ENCODE measurements at regions of chr11 and their contacts with region 1.

Region 1: GRCh38 chr11:76807206-76807875 is 24.2 kb downstream of the TSKU start:
- DNase-seq: peak; percentile 80 to 96
- ATAC-seq: peak; percentile 83

Region 2: DNA sequence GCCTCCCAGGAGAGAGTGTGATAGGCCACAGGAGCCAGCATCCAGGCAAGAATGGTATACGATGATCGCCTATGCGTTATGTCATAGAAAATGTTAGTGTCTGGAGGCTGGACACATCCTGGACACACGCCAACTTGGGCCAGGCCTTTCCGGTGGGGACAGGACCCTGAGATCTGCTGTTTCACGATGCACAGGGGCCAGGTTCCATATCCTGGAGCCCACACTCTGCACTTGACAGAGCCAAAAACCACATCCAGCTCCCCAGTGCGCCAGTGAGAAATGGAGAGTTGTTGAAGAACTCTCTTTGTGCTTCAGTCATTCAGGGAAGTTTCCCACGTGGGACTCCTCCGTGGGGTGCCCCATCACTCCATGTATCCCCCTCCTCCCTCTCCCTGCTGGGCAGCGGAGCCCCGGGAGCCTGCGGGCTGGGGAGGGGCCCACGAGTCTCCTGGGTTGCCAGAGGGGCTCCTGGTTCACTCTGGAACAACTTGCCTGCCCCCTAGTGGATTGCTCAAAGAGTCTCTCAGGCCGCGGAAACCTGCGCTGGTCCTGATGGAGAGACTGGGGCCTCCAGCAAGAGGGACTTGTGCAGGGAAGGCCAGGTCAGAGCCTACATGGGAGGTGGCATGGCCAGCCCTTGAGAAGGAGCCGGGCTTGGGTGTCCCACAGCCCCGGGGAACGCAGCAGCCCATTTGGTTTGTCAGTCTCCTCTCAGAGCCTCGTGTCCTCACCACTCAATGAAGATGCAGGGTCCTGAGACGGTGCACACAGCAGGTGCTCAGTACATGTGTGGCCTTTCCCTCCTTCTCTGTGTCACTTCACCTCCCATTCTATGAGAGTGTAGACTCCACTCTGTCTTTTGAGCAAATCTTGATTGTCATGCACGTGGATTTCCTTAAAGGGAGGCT is 126.6 kb before region 1 on chr11:
- intact Hi-C with region 1: no loop called
- DNase-seq: peak; percentile 62 to 73
- ATAC-seq: peak; percentile 87

Region 3: DNA sequence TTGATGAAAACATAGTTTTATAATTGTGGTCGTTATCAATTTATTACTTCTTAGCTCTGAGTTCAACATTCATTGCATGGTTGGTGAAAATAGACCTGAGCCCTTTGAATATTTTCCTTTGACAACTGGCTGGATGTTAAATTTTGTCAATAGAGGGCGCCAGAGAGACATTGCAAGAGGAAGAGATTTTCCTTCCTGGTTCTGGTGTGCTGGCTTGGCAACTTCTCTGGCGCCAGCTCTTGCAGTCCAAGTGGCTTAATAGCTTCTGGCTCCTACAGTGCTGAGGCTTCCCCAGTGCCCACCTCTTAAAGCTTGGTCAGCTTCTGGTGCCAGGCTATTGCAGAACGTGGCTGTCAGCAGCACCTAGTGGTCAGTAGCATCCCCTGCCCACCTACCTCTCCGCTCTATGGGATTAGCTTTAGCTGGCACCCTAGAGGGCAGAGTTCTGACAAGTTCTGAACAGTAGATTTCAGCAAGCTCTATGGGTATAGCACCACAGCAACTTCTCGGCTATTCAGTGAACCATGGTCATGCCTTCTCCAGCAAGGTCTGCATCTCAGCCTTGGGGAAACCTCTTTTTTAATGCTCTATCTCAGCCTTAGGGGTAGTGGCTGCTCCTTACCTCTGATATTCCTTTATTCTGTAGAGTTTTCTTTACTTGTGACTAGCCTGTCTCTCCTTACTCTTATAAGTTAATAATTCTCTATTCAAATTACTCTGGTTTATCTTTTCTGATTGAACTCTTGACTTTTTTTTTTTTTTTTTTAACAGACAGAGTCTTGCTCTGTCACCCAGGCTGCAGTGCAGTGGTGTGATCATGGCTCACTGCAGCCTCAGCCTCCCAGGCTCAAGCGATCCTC is 112.8 kb after region 1 on chr11:
- intact Hi-C with region 1: loop called (anchors 5 kb)
- DNase-seq: peak; percentile 74 to 77
- ATAC-seq: peak; percentile 89